Naive thymus-derived CD4-positive, alpha-beta T cell (primary cell): ENCODE measurements at regions of chr16 and their contacts with region 1.

Region 1: DNA sequence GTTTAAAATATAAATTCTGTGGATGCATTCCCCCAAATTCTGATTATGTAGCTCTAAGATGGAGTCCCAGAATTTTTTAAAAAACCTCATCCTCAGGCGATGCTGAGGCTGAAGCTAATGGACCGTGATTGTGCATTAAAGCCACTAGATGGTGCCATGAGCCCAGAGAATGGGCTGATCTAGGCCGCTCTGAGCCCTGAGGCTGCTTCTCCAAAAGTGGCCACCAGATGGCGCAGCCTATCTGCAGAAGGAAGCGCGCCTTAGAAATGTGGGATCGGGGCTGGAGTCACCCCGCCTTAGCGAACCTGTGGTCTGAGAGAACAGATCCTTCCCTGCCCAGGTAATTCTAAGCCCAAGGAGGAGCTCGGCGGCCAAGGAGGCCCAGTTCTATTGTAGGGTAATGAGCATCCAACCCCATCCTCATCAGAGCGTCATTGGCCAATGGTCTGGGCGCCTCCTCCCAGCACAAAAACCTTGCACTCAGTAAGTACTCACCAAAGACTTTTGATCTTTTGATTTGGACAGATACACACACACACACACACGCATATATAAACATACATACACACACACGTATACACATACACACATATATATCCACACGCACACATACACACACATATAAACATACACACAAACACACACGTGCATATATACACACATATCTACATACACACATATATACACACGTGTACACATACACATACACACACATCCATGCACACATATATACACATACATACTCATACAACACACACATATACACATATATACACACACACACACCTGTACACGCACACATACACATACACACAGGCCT is 13.7 kb upstream of the MMP2 start:
- DNase-seq: peak; percentile 54 to 86 (median 69)
- ATAC-seq: peak; percentile 97
- H3K4me3 ChIP-seq: no peak overlapping the region
- H3K4me3 Mint-ChIP-seq: no peak overlapping the region
- H3K27ac ChIP-seq: no peak overlapping the region
- H3K27ac Mint-ChIP-seq: no peak overlapping the region
- H3K4me1 ChIP-seq: no peaks in the 10 kb centered on the region
- H3K4me1 Mint-ChIP-seq: peaks cover 0 to 7% (median 0%) of the 10 kb centered on the region in 7 donors
- H3K27me3 ChIP-seq: no peaks in the 10 kb centered on the region
- H3K27me3 Mint-ChIP-seq: peaks cover 0 to 4% (median 0%) of the 10 kb centered on the region in 5 donors

Region 2: GRCh38 chr16:53945996-53946395 is 1519.3 kb before region 1 on chr16:
- CTCF ChIA-PET with region 1: no interaction called
- POLR2A ChIA-PET with region 1: no interaction called
- intact Hi-C with region 1: loop called in 1 of 2 experiments (anchors 10 kb)
- DNase-seq: peak in 1 of 9 donors; percentile 17
- ATAC-seq: peak; percentile 52
- H3K4me3 ChIP-seq: no peak overlapping the region
- H3K4me3 Mint-ChIP-seq: no peak overlapping the region
- H3K27ac ChIP-seq: no peak overlapping the region
- H3K27ac Mint-ChIP-seq: peak overlapping the region in 1 of 9 donors; percentile 33
- H3K4me1 ChIP-seq: no peaks in the 10 kb centered on the region
- H3K4me1 Mint-ChIP-seq: peaks cover 8 to 33% (median 20%) of the 10 kb centered on the region in 7 donors
- H3K27me3 ChIP-seq: no peaks in the 10 kb centered on the region
- H3K27me3 Mint-ChIP-seq: no peaks in the 10 kb centered on the region

Region 3: DNA sequence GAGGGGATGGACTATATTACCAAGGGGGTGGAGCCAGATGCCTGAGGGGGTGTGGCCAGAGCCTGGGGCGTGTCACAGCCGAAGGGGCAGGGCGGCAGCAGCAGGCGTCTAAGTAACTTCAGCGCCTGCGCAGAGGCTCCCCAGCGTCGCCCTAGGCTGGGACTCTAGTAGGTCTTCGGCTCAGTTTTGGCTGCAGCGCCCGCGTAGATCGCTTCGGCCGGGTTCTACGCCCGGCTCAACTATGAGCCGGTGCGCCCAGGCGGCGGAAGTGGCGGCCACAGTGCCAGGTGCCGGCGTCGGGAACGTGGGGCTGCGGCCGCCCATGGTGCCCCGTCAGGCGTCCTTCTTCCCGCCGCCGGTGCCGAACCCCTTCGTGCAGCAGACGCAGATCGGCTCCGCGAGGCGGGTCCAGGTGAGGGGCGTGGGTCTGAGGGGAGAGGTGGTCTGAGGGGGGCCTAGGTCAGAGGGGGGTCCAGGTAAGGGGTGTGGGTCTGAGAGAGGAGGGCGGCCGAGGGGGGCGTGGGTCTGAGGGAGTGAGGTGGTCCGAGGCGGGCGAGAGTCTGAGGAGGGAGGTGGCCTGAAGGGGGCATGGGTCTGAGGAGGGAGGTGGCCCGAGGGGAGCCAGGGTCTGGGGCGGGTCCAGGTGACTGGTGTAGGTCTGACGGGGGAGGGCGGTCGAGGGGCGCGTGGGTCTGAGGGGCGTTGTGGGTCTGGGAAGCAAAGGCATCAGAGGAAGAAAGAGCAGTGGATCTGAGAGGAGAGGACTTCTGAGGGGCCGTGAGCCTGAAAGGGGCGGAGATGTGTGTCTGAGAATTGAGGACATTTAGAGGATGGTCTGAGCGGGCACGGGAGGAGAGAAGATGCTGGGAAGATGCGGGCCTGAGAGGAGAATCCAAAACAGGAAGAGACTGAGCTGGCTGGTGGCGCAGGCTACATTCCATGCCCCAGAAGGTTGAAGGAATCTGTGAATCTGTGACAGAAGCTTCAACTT is 43.9 kb after region 1 on chr16 and contains the start of gene LPCAT2:
- CTCF ChIA-PET with region 1: no interaction called
- POLR2A ChIA-PET with region 1: no interaction called
- intact Hi-C with region 1: loop called in 1 of 2 experiments (anchors 5 kb)
- DNase-seq: peak in 3 of 9 donors; percentile 9 to 65 (median 17)
- ATAC-seq: peak; percentile 85
- H3K4me3 ChIP-seq: no peak within 1 kb of the TSS
- H3K4me3 Mint-ChIP-seq: peak within 1 kb of the TSS; percentile 17 to 87 (median 69)
- H3K27ac ChIP-seq: no peak within 1 kb of the TSS
- H3K27ac Mint-ChIP-seq: peak within 1 kb of the TSS in 1 of 9 donors; percentile 64
- H3K4me1 ChIP-seq: no peaks in the 10 kb centered on the region
- H3K4me1 Mint-ChIP-seq: peaks cover 5 to 14% (median 9%) of the 10 kb centered on the region in 7 donors
- H3K27me3 ChIP-seq: peaks cover 0 to 5% of the 10 kb centered on the region in 2 donors
- H3K27me3 Mint-ChIP-seq: peaks cover 41 to 72% (median 53%) of the 10 kb centered on the region in 5 donors
- total RNA-seq, gene LPCAT2: 1.1 to 16.9 (median 2.5) TPM

Region 4: DNA sequence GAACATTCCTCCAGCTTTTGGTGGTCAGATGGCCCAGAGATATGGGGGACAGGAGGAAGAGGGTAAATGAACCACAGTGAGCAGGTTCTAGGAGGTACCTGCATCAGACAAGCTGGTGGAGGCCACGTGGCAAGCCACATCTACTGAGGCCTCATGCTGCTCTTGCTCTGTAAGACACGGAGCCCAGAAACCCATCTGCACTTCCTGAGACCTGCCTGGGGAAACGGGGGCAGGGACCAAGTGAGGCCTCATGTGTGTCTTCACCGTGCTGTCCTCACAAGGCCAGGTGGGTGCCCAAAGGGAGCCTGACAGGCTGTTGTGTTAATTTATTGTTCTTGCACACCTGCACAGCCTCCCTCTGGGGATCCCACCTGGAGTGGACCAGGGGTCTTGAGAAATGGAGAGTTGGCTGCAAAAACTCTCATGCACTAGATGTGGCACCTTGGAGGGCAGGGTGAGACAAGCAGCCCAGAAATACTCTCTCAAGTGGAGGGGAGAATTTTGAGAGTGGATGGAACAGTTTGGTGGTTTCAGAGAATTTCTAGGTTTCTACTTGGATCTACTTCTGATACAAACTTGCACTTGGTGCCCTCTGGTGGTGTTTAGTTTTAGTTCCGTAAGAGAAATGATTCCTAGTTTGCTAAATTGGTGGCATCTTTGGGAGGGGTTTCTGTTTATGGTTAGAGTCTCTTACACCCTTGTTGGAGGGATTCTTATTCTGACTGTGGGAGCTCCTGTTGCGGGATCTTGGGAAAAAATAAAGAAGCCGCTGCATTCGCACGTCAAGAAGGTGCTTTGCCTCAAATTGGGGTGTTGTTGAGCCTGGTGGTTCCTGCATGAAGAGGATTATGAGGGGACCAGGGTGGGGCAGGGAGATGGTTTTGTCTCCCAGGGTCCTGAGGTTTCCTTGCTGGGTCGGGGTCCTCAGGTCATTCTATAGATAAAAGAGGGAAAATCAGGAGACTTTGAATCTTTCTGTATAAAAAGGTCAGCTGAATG is 238.0 kb after region 1 on chr16:
- CTCF ChIA-PET with region 1: interaction called, 4 read pairs
- POLR2A ChIA-PET with region 1: no interaction called
- intact Hi-C with region 1: loop called (anchors 1 kb)
- DNase-seq: peak in 4 of 9 donors; percentile 4 to 18 (median 6)
- ATAC-seq: no peak
- H3K4me3 ChIP-seq: no peak overlapping the region
- H3K4me3 Mint-ChIP-seq: no peak overlapping the region
- H3K27ac ChIP-seq: no peak overlapping the region
- H3K27ac Mint-ChIP-seq: no peak overlapping the region
- H3K4me1 ChIP-seq: no peaks in the 10 kb centered on the region
- H3K4me1 Mint-ChIP-seq: peaks cover 0 to 6% (median 0%) of the 10 kb centered on the region in 7 donors
- H3K27me3 ChIP-seq: peaks cover 0 to 5% of the 10 kb centered on the region in 2 donors
- H3K27me3 Mint-ChIP-seq: peaks cover 1 to 21% (median 8%) of the 10 kb centered on the region in 5 donors

Region 5: GRCh38 chr16:56317998-56318826 is 852.9 kb after region 1 on chr16:
- CTCF ChIA-PET with region 1: interaction called, 9 read pairs
- POLR2A ChIA-PET with region 1: no interaction called
- intact Hi-C with region 1: loop called in 1 of 2 experiments (anchors 1 kb)
- DNase-seq: peak; percentile 42 to 82 (median 67)
- ATAC-seq: peak; percentile 95
- H3K4me3 ChIP-seq: peak overlapping the region; percentile 47
- H3K4me3 Mint-ChIP-seq: peak overlapping the region; percentile 29 to 72 (median 56)
- H3K27ac ChIP-seq: no peak overlapping the region
- H3K27ac Mint-ChIP-seq: peak overlapping the region in 1 of 9 donors; percentile 66
- H3K4me1 ChIP-seq: peaks cover 0 to 7% of the 10 kb centered on the region in 2 donors
- H3K4me1 Mint-ChIP-seq: peaks cover 0 to 14% (median 0%) of the 10 kb centered on the region in 7 donors
- H3K27me3 ChIP-seq: no peaks in the 10 kb centered on the region
- H3K27me3 Mint-ChIP-seq: peaks cover 0 to 9% (median 4%) of the 10 kb centered on the region in 5 donors